Activated naive CD4-positive, alpha-beta T cell treated with anti-CD3 and anti-CD28 coated beads, Interleukin-2, amount 10 ng/mL, durations not matched to agents 7 days and 5 days (primary cell): ENCODE measurements at regions of chr5 and their contacts with region 1.

Region 1: GRCh38 chr5:138035605-138036537 is 3.0 kb upstream of the FAM13B start:
- DNase-seq: peak; percentile 76
- H3K4me3 Mint-ChIP-seq: no peak overlapping the region
- H3K27ac Mint-ChIP-seq: no peak overlapping the region
- H3K4me1 Mint-ChIP-seq: peaks cover 27% of the 10 kb centered on the region
- H3K27me3 Mint-ChIP-seq: peaks cover 5% of the 10 kb centered on the region

Region 2: GRCh38 chr5:138054847-138055558 is 19.1 kb after region 1 on chr5:
- CTCF ChIA-PET with region 1: interaction called, 16 read pairs
- DNase-seq: no peak
- H3K4me3 Mint-ChIP-seq: no peak overlapping the region
- H3K27ac Mint-ChIP-seq: no peak overlapping the region
- H3K4me1 Mint-ChIP-seq: peaks cover 8% of the 10 kb centered on the region
- H3K27me3 Mint-ChIP-seq: peaks cover 17% of the 10 kb centered on the region

Region 3: DNA sequence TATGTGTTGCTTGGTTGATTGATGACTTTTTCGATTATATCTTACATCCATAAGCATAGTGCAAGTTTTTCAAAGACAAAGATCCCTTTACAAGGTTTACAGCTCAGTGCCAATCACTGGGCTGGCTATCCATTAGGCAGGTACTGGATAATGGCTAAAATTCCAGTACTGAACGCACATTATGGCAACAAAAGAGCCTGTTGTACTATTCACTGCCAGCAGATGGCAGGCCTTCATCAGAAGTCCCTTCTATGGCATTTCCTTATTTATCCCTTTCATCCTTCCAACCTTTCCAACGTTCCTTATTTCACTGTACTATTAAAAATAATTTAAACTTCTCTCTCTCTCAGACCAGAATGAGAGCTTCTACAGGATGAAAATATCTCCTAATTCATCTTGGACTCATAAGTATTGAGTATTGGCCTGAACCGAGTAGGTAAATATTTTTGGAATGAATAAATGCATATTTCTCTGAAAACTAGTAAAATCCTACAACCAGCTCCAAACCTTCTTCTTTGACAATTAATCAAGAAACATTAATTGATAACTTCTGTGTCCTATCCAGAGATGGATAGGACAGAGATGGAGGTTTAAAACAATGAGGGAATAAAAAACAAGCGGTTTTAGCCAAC is 41.3 kb after region 1 on chr5:
- CTCF ChIA-PET with region 1: interaction called, 20 read pairs
- DNase-seq: peak; percentile 71
- H3K4me3 Mint-ChIP-seq: no peak overlapping the region
- H3K27ac Mint-ChIP-seq: no peak overlapping the region
- H3K4me1 Mint-ChIP-seq: peaks cover 18% of the 10 kb centered on the region
- H3K27me3 Mint-ChIP-seq: peaks cover 3% of the 10 kb centered on the region

Region 4: DNA sequence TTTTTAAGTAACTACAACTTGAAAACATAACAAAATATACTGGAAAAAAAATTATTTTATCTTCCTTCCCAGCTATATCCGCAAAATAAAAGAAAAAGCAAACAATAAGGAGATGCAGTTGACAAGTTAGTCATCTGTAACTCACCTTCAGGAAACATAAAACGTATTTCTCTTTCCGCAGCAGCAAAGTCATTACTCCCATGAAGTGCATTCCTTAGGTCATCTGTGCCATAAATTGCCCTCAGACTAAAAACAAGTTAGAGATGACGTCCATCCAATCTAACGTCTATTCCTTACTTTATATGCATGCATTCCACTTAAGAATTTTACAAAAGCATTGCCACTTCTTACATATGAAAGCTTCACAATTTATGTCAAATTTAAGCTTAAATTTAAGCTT is 92.5 kb after region 1 on chr5:
- CTCF ChIA-PET with region 1: interaction called, 66 read pairs
- DNase-seq: no peak
- H3K4me3 Mint-ChIP-seq: no peak overlapping the region
- H3K27ac Mint-ChIP-seq: no peak overlapping the region
- H3K4me1 Mint-ChIP-seq: peaks cover 3% of the 10 kb centered on the region
- H3K27me3 Mint-ChIP-seq: peaks cover 19% of the 10 kb centered on the region